HCT116 (cell line): ENCODE measurements at regions of chr15 and their contacts with region 1.

Region 1: GRCh38 chr15:84883433-84883832 is 1.0 kb upstream of the SLC28A1 start:
- DNase-seq: no peak
- ATAC-seq: no peak
- H3K4me3 ChIP-seq: no peak overlapping the region
- H3K27ac ChIP-seq: no peak overlapping the region
- H3K4me1 ChIP-seq: peaks cover 0 to 5% of the 10 kb centered on the region in 2 experiments; a peak in 2 of 4 replicates
- H3K27me3 ChIP-seq: no peaks in the 10 kb centered on the region
- CTCF ChIP-seq: no peak
- POLR2A ChIP-seq: no peak
- RAD21 ChIP-seq: no peak

Region 2: DNA sequence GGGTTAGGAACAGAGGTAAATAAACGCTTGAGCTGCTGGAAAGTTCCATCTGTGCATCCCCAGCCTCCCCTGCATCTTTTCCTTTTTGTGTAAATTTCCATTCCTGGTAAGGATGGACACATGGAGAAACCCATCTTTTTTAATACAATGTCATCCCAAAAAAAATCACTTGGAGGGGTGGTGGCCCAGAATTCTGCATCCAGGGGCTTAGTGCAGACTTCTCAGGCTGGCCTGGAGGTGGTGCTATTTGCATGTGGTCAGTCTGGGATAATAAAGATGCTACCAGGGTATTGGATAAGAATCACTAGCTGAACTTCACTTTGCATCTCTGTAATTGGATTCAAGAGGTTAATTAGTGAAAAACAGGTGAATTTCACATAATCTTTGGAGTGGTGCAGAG is 284.5 kb before region 1 on chr15:
- CTCF ChIA-PET with region 1: interaction called, 5 read pairs
- POLR2A ChIA-PET with region 1: interaction called, 3 read pairs
- RAD21 ChIA-PET with region 1: no interaction called
- intact Hi-C with region 1: loop called (anchors 2 kb)
- DNase-seq: peak; percentile 44
- ATAC-seq: peak; percentile 25; the same call in 1 of the 2 replicates
- H3K4me3 ChIP-seq: no peak overlapping the region
- H3K27ac ChIP-seq: no peak overlapping the region
- H3K4me1 ChIP-seq: peaks cover 2 to 11% of the 10 kb centered on the region in 2 experiments
- H3K27me3 ChIP-seq: no peaks in the 10 kb centered on the region
- CTCF ChIP-seq: peak; percentile 76 to 86 (median 76); a peak in 5 of 6 replicates
- POLR2A ChIP-seq: no peak
- RAD21 ChIP-seq: peak; percentile 88

Region 3: DNA sequence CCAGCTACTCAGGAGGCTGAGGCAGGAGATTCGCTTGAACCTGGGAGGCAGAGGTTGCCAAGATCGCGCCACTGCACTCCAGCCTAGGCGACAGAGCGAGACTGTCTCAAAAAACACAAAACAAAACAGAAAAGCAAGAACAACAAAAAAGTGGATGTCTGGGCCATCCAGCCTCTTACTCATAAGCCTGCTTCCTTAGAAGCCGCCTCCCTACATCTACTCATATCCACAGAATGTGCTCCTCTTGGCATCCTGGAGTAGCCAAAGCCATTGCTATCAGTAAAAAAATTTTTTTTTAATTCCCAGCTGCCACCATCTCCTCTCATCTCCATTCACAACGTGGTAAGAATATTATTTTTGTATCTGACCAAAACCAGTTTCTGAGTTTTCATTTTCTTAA is 271.8 kb before region 1 on chr15:
- CTCF ChIA-PET with region 1: no interaction called
- POLR2A ChIA-PET with region 1: no interaction called
- RAD21 ChIA-PET with region 1: no interaction called
- intact Hi-C with region 1: no loop called
- DNase-seq: no peak
- ATAC-seq: no peak
- H3K4me3 ChIP-seq: no peak overlapping the region
- H3K27ac ChIP-seq: no peak overlapping the region
- H3K4me1 ChIP-seq: no peaks in the 10 kb centered on the region; a peak in 1 of 4 replicates
- H3K27me3 ChIP-seq: no peaks in the 10 kb centered on the region
- CTCF ChIP-seq: no peak
- POLR2A ChIP-seq: no peak
- RAD21 ChIP-seq: no peak

Region 4: GRCh38 chr15:84658080-84658787 is 225.2 kb before region 1 on chr15 and contains the start of gene NMB:
- CTCF ChIA-PET with region 1: interaction called, 6 read pairs
- POLR2A ChIA-PET with region 1: interaction called, 4 read pairs
- RAD21 ChIA-PET with region 1: no interaction called
- intact Hi-C with region 1: loop called (anchors 1 kb)
- DNase-seq: peak; percentile 24
- ATAC-seq: peak; percentile 50
- H3K4me3 ChIP-seq: peak within 1 kb of the TSS; percentile 31 to 56
- H3K27ac ChIP-seq: peak within 1 kb of the TSS; percentile 58
- H3K4me1 ChIP-seq: peaks cover 14 to 33% of the 10 kb centered on the region in 2 experiments
- H3K27me3 ChIP-seq: no peaks in the 10 kb centered on the region
- CTCF ChIP-seq: peak; percentile 14 to 30 (median 22); a peak in 3 of 6 replicates
- POLR2A ChIP-seq: no peak
- RAD21 ChIP-seq: no peak; the same call in 1 of the 2 replicates
- total RNA-seq, gene NMB: 9.8 TPM

Region 5: DNA sequence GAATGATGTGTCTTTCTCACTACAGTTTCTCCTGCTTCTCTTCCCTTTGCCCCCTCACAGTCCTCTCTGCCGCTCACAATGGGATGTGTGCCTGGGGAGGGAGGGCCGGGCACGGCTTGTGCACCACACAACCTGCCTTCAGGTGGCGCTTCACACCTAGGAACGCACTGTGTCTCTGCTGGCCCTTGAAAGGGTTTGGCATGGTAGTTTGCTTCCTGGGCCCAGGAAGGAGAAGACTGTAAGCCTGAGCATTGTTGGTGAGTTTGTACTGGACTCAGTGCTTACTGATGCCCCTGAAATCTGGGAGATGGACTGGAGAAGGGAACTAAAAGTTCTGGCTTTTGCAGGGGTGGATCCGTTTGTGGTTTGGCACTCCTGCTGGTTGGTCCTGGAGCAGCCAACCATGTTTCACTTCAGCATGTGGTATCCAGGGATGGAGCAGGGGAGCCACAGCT is 57.0 kb before region 1 on chr15:
- CTCF ChIA-PET with region 1: interaction called, 5 read pairs
- POLR2A ChIA-PET with region 1: no interaction called
- RAD21 ChIA-PET with region 1: no interaction called
- intact Hi-C with region 1: loop called (anchors 1 kb)
- DNase-seq: peak; percentile 56
- ATAC-seq: peak; percentile 99
- H3K4me3 ChIP-seq: no peak overlapping the region
- H3K27ac ChIP-seq: no peak overlapping the region
- H3K4me1 ChIP-seq: peaks cover 0 to 12% of the 10 kb centered on the region in 2 experiments; a peak in 3 of 4 replicates
- H3K27me3 ChIP-seq: no peaks in the 10 kb centered on the region
- CTCF ChIP-seq: peak; percentile 80 to 92 (median 89)
- POLR2A ChIP-seq: no peak
- RAD21 ChIP-seq: peak; percentile 98

Region 6: DNA sequence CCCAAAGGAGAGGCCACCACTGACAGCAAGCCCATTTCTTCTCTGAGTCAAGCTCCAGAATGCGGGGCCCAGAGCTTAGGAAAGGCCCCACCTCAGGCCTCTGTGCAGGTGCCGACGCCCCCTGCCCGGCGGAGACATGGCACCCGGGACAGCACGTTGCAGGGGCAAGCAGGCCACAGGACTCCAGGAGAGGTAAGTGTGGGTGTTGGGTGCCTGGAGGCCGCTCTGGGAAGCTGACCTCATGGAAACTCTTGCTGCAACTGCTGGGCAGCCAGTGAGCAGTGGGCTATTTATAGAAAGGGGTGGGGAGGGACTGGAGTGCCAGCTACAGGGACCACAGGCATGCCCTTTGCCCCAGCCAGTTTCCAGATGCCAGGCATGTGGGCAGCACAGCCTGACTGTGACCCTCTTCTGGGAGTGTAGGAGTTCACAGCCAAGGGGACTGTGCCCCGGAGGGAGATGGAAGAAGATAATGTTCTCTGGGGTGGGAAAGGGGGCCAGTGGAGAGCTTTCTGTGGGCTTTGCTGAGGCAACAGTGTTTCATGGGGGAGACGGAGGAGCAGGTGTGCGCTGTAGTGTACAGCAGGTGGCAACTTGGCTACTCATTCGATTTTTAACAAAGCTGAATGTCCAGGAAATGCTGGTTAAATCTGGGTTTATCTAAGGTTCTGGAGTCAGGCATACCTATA is 42.5 kb before region 1 on chr15:
- CTCF ChIA-PET with region 1: interaction called, 9 read pairs
- POLR2A ChIA-PET with region 1: no interaction called
- RAD21 ChIA-PET with region 1: no interaction called
- intact Hi-C with region 1: loop called (anchors 2 kb)
- DNase-seq: peak; percentile 29
- ATAC-seq: peak; percentile 39; the same call in 1 of the 2 replicates
- H3K4me3 ChIP-seq: no peak overlapping the region
- H3K27ac ChIP-seq: peak overlapping the region; percentile 0; the same call in 1 of the 2 replicates
- H3K4me1 ChIP-seq: peaks cover 13 to 27% of the 10 kb centered on the region in 2 experiments
- H3K27me3 ChIP-seq: no peaks in the 10 kb centered on the region
- CTCF ChIP-seq: no peak
- POLR2A ChIP-seq: no peak
- RAD21 ChIP-seq: no peak

Region 7: GRCh38 chr15:85374831-85375230 is 491.4 kb after region 1 on chr15:
- CTCF ChIA-PET with region 1: no interaction called
- POLR2A ChIA-PET with region 1: no interaction called
- RAD21 ChIA-PET with region 1: no interaction called
- intact Hi-C with region 1: no loop called
- DNase-seq: no peak
- ATAC-seq: no peak
- H3K4me3 ChIP-seq: no peak overlapping the region
- H3K27ac ChIP-seq: no peak overlapping the region
- H3K4me1 ChIP-seq: peaks cover 7% of the 10 kb centered on the region in 2 experiments; a peak in 3 of 4 replicates
- H3K27me3 ChIP-seq: no peaks in the 10 kb centered on the region
- CTCF ChIP-seq: no peak
- POLR2A ChIP-seq: no peak
- RAD21 ChIP-seq: no peak